ENCODE measurements at regions of chr4 and their contacts with region 1.

Region 1: DNA sequence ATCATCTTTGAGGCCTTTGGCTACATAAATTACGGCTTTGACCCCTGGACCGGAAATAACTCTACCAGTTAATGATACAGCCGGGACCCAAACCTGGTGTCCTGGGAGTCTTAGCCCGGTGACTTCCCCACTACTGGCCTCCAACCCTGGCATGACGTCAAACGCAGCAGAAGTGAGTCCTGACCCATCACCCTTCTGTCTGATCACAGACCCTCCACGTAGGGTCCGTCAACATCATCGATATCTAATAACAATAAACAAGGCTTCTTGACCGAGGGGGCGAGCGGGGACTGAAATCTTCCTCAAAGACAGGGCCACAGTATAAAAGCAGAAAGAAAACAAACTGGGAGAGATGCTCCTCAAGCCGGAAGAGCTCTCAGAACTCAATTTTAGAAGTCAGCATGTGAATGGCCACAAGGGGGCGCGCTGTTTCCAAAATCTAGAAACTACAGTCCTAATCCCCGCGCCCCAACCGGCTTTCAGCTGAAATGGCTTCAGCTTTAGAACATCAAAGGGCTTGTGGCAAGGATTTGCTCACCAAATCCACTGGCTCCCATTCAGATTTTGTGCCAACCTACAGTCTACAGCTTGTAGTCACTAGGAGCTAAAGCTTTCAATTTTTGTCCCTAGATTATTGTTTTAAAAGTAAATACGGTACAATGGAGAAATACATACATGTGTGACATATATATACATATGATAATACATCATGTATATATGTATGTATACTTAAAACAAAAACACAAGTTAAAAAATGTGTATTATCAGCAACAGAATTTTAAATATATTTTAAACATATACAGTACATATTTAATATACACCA is 46.4 kb upstream of the ENPP6 start:
- DNase-seq: peak; percentile 93 to 94
- H3K4me3 ChIP-seq: no peak overlapping the region
- H3K27ac ChIP-seq: no peak overlapping the region
- H3K4me1 ChIP-seq: no peaks in the 10 kb centered on the region
- H3K27me3 ChIP-seq: no peaks in the 10 kb centered on the region
- CTCF ChIP-seq: peak; percentile 86 to 89

Region 2: GRCh38 chr4:184627765-184628480 is 363.8 kb after region 1 on chr4:
- intact Hi-C with region 1: loop called (anchors 10 kb)
- DNase-seq: no peak
- H3K4me3 ChIP-seq: no peak overlapping the region
- H3K27ac ChIP-seq: no peak overlapping the region
- H3K4me1 ChIP-seq: no peaks in the 10 kb centered on the region
- H3K27me3 ChIP-seq: no peaks in the 10 kb centered on the region
- CTCF ChIP-seq: no peak

Measured in tibial artery (tissue), 4 donors.